ENCODE measurements at regions of chr18 and their contacts with region 1.

Region 1: DNA sequence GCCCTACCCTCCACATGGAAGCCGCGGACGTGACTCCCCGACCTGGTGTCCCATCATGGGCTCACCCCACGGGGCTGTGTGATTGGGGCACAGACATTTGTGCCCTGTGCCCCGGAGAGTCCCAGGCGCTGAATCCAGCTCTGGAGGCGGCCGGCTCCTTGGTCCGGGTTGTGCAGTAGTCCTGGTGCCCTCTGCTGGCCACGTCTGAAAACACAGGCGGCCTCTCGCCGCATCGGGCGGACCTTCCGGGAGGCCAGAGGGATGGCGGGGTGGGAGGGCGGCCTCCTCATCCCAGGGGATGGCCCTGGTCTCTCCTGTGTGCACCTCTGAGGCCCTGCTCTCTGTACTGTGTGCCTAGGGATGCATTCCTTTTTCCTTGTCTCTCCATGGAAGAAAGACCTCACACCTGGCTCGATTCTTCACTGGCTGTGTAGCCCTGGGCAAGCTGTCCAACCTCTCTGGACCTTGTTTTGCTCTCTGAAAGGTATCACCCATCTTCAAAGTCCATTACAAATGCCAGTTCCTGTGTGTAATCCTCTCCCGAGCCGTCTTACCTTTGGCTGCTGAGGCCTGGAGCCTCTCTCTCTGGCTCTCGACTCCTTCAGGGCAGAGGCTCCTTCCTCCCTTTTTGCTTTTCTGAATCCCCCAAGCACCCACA is 27.6 kb downstream of the CELF4 start:
- DNase-seq: peak; percentile 41
- ATAC-seq: peak; percentile 90
- H3K4me3 ChIP-seq: no peak overlapping the region
- H3K27ac ChIP-seq: no peak overlapping the region
- H3K4me1 ChIP-seq: no peaks in the 10 kb centered on the region
- H3K27me3 ChIP-seq: no peaks in the 10 kb centered on the region
- CTCF ChIP-seq: peak; percentile 57

Region 2: GRCh38 chr18:37385846-37386778 is 151.9 kb before region 1 on chr18:
- CTCF ChIA-PET with region 1: interaction called, 3 read pairs
- POLR2A ChIA-PET with region 1: no interaction called
- intact Hi-C with region 1: loop called (anchors 10 kb)
- DNase-seq: peak; percentile 47
- ATAC-seq: no peak
- H3K4me3 ChIP-seq: no peak overlapping the region
- H3K27ac ChIP-seq: no peak overlapping the region
- H3K4me1 ChIP-seq: no peaks in the 10 kb centered on the region; the same call in 1 of the 2 replicates
- H3K27me3 ChIP-seq: no peaks in the 10 kb centered on the region
- CTCF ChIP-seq: peak; percentile 62

Region 3: DNA sequence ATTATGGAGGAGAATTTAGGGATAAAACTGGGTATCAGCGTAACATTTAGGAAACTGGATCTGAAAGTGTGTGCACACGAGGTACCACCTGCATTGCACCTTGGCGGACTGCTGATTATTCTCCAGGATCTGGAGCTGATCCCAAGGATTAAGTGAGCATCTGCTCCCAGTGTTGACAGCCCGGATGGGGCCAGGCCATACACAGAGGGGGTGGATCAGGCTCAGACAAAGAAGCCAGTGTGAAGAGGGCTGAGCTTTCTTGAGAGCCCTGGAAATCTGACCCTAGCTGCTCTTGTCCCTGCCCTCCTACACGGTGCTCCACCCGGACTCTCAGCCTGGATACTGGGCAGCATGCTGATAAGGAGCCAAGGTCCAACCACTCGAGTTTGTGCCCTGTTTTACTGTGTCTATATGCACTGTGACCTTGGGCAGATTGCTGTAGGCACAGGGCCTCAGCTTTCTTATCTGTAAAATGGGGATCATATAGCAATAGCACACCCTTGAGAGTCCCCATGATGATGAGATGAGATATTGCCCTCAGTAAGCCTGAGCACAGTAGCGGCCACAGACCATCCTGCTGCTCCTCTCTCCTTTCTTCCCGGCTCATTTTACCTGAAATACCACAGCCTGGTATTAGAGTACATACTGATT is 424.4 kb after region 1 on chr18:
- CTCF ChIA-PET with region 1: no interaction called
- POLR2A ChIA-PET with region 1: no interaction called
- intact Hi-C with region 1: no loop called
- DNase-seq: no peak
- ATAC-seq: no peak
- H3K4me3 ChIP-seq: no peak overlapping the region
- H3K27ac ChIP-seq: no peak overlapping the region
- H3K4me1 ChIP-seq: no peaks in the 10 kb centered on the region
- H3K27me3 ChIP-seq: no peaks in the 10 kb centered on the region
- CTCF ChIP-seq: no peak

Region 4: GRCh38 chr18:39346916-39347315 is 1808.9 kb after region 1 on chr18:
- CTCF ChIA-PET with region 1: interaction called, 11 read pairs
- POLR2A ChIA-PET with region 1: no interaction called
- intact Hi-C with region 1: no loop called
- DNase-seq: no peak
- ATAC-seq: no peak
- H3K4me3 ChIP-seq: no peak overlapping the region
- H3K27ac ChIP-seq: no peak overlapping the region
- H3K4me1 ChIP-seq: no peaks in the 10 kb centered on the region
- H3K27me3 ChIP-seq: no peaks in the 10 kb centered on the region
- CTCF ChIP-seq: no peak